CD4-positive, alpha-beta memory T cell (primary cell): ENCODE measurements at regions of chr7 and their contacts with region 1.

Region 1: DNA sequence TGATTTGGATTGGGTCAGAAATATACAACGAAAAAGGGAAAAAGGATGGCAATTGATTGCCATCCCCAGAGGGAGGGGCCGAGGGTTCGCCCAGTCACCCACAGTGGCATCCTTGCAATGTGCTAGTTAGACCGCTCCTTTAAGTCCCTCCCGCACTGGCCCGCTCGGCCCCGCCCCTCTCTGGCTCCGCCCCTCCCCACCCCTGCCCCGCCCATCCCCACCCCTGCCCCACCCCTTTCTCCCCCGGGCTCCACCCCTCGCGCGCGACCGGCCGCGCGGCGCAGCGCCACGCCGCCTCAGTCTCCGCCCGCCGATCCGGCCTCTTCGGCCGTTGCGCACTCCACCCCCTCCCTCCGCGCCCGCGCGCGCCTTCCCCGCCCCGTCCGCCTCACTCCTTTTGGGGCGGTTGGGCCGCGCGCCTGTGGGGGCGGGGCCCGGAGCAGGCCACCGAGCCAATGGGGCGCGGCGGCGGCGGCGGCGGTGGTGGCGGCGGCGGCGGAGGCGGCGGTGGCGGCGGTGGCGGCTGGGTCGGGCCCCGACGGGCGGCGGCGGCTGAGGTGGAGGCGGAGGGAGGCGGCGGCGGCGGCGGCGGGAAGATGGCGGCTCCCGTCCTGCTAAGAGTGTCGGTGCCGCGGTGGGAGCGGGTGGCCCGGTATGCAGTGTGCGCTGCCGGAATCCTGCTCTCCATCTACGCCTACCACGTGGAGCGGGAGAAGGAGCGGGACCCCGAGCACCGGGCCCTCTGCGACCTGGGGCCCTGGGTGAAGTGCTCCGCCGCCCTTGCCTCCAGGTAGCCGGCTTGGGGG is at the start of gene VKORC1L1:
- DNase-seq: peak; percentile 92 to 95 (median 94)
- H3K4me3 ChIP-seq: peak within 1 kb of the TSS; percentile 23 to 44
- H3K4me3 Mint-ChIP-seq: peak within 1 kb of the TSS; percentile 75 to 92 (median 88)
- H3K27ac ChIP-seq: no peak within 1 kb of the TSS
- H3K27ac Mint-ChIP-seq: peak within 1 kb of the TSS; percentile 82 to 91 (median 89)
- H3K4me1 ChIP-seq: peaks cover 4% of the 10 kb centered on the region
- H3K4me1 Mint-ChIP-seq: peaks cover 5 to 13% (median 8%) of the 10 kb centered on the region in 4 donors
- H3K27me3 ChIP-seq: no peaks in the 10 kb centered on the region
- H3K27me3 Mint-ChIP-seq: no peaks in the 10 kb centered on the region
- total RNA-seq, gene VKORC1L1: 11.3 to 12.6 TPM

Region 2: DNA sequence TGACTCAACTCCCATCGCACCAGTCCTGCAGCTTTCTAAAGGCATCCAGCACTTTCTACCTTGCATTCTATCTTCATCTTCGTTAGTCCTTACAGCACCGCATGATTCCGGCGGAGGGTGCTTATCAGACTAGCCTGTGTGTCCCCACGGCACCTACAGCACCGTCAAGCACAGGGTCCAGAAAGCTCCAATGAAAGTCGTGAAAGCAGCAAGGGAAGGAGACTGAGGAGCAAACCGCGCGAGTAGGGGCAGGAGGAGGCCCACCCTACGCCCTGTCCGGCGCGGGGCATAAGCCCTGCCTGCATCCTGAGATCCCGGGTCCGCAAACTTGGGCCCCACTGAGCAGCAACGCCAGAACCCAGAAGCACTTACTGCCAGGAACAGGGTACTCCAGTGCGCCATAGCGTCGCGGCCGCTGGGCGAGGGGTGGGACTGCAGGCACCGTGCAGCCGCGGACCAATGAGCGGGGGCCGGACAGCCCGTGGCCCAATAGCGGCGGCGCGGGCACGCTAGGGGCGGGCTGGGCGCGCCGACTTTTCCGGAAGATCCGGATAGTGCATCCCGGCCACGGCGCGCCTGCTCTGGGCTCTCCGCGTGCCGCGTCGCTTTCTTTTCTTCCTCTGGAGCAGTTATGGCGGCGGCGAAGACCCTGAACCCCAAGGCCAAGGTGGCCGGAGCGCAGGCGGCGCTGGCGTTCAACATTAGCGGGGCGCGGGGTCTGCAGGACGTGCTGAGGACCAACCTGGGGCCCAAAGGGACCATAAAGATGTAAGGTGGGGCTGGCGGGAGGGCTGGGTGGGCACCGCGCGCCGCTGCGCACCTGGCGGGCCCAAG is 122.3 kb before region 1 on chr7:
- CTCF ChIA-PET with region 1: no interaction called
- POLR2A ChIA-PET with region 1: no interaction called
- intact Hi-C with region 1: loop called (anchors 1 kb)
- DNase-seq: peak; percentile 83 to 86 (median 85)
- H3K4me3 ChIP-seq: peak overlapping the region; percentile 91 to 99
- H3K4me3 Mint-ChIP-seq: peak overlapping the region; percentile 93 to 98 (median 96)
- H3K27ac ChIP-seq: peak overlapping the region; percentile 60
- H3K27ac Mint-ChIP-seq: peak overlapping the region; percentile 87 to 97 (median 94)
- H3K4me1 ChIP-seq: peaks cover 24% of the 10 kb centered on the region
- H3K4me1 Mint-ChIP-seq: peaks cover 7 to 45% (median 27%) of the 10 kb centered on the region in 4 donors
- H3K27me3 ChIP-seq: no peaks in the 10 kb centered on the region
- H3K27me3 Mint-ChIP-seq: no peaks in the 10 kb centered on the region

Region 3: DNA sequence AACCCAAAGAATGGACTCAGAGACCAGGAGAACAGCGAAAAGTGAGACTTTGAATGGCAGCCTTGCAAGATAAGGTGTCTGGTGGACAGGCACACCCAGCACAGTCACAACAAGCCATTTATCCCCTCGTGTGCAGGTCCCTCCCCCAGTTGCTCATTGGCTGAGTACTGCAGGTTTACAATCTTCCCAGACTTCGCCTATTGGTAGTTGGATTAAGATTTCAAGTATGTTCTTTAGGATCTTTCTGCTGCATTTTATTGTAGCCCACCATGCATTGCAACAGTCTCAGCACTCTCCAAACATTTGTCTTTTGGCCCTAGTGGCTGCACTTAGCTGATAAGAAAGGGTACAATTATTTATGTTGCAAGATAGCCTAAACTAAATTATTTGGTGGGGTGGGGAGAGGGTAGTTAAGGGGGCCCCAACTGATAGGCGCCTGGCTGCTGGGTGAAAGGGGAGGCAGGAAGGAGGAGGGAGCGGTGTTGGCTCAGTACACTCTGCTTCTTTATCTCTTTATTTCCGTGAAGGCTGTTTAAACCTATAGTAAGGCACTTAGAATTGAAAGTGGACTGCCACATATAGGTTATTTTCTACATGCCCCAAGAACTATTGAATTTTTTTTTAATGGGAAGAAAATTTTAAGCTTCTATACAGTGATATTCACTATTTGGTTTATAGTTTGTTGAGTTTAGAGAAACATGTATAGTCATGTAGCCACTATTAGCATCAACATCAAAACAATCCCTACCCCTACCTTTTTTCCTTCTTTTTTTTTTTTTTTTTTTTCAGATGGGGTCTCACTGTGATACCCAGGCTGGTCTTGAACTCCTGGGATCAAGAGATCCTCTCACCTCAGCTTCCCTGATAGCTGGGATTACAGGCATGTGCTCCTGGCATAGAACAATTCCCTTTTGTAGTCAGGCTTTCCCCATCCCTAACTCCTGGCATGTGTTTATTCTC is 54.8 kb after region 1 on chr7:
- CTCF ChIA-PET with region 1: no interaction called
- POLR2A ChIA-PET with region 1: no interaction called
- intact Hi-C with region 1: no loop called
- DNase-seq: no peak
- H3K4me3 ChIP-seq: no peak overlapping the region
- H3K4me3 Mint-ChIP-seq: no peak overlapping the region
- H3K27ac ChIP-seq: no peak overlapping the region
- H3K27ac Mint-ChIP-seq: peak overlapping the region in 1 of 7 donors; percentile 43
- H3K4me1 ChIP-seq: no peaks in the 10 kb centered on the region
- H3K4me1 Mint-ChIP-seq: peaks cover 13 to 26% (median 20%) of the 10 kb centered on the region in 4 donors
- H3K27me3 ChIP-seq: no peaks in the 10 kb centered on the region
- H3K27me3 Mint-ChIP-seq: no peaks in the 10 kb centered on the region

Region 4: GRCh38 chr7:66013916-66014315 is 140.9 kb after region 1 on chr7:
- CTCF ChIA-PET with region 1: no interaction called
- POLR2A ChIA-PET with region 1: no interaction called
- intact Hi-C with region 1: no loop called
- DNase-seq: no peak
- H3K4me3 ChIP-seq: no peak overlapping the region
- H3K4me3 Mint-ChIP-seq: no peak overlapping the region
- H3K27ac ChIP-seq: no peak overlapping the region
- H3K27ac Mint-ChIP-seq: no peak overlapping the region
- H3K4me1 ChIP-seq: no peaks in the 10 kb centered on the region
- H3K4me1 Mint-ChIP-seq: no peaks in the 10 kb centered on the region
- H3K27me3 ChIP-seq: no peaks in the 10 kb centered on the region
- H3K27me3 Mint-ChIP-seq: peaks cover 0 to 4% of the 10 kb centered on the region in 2 donors

Region 5: GRCh38 chr7:66529883-66530610 is 657.1 kb after region 1 on chr7:
- CTCF ChIA-PET with region 1: no interaction called
- POLR2A ChIA-PET with region 1: no interaction called
- intact Hi-C with region 1: no loop called
- DNase-seq: no peak
- H3K4me3 ChIP-seq: no peak overlapping the region
- H3K4me3 Mint-ChIP-seq: no peak overlapping the region
- H3K27ac ChIP-seq: no peak overlapping the region
- H3K27ac Mint-ChIP-seq: peak overlapping the region in 4 of 7 donors; percentile 40 to 71 (median 54)
- H3K4me1 ChIP-seq: no peaks in the 10 kb centered on the region
- H3K4me1 Mint-ChIP-seq: peaks cover 0 to 4% (median 2%) of the 10 kb centered on the region in 4 donors
- H3K27me3 ChIP-seq: no peaks in the 10 kb centered on the region
- H3K27me3 Mint-ChIP-seq: no peaks in the 10 kb centered on the region